ENCODE measurements at regions of chr7 and their contacts with region 1.

Region 1: DNA sequence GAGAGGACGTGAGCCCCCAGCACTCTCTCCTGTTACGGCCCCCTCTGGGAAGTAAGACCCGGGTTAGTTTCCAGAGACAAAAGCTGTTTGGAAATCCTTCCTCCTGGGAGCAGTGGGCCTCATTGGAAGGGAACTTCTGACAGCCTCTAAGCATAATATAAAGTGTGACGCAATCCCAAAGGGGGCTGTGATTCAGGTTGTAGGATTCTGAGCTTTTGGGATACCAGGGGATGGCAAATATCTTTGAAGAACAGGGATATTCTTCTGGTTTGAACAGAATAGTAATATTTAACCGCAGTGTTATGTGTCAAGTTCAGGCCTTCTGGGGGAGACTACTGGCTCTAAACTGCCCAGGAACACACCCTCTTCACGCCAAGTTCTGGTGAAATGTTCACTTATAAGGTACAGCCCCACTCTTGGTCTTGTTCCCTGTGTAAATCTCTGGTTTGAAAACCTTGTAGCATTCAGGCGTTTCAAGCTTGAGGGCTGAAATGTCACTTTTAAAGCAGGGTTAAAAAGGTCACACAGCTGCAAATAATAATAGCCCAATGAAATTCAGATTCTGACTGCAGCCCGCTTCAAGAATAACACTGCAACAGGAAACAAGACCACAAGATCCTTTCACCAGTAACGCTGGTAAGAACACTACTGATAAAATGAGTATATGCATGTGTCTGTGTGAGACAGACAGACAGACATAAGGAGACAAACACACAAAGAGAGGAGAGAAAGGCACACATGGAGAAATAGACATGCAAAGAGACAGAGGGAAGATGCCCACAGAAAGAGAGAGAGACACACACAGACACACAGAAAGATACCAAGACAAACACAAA is 69.0 kb downstream of the CREB5 start:
- DNase-seq: peak; percentile 85
- ATAC-seq: peak; percentile 63
- H3K4me3 ChIP-seq: no peak overlapping the region
- H3K27ac ChIP-seq: peak overlapping the region; percentile 72
- H3K4me1 ChIP-seq: peaks cover 41% of the 10 kb centered on the region
- H3K27me3 ChIP-seq: no peaks in the 10 kb centered on the region
- CTCF ChIP-seq: no peak
- EP300 ChIP-seq: peak; percentile 88 to 94
- POLR2A ChIP-seq: no peak
- RAD21 ChIP-seq: peak; percentile 26

Region 2: DNA sequence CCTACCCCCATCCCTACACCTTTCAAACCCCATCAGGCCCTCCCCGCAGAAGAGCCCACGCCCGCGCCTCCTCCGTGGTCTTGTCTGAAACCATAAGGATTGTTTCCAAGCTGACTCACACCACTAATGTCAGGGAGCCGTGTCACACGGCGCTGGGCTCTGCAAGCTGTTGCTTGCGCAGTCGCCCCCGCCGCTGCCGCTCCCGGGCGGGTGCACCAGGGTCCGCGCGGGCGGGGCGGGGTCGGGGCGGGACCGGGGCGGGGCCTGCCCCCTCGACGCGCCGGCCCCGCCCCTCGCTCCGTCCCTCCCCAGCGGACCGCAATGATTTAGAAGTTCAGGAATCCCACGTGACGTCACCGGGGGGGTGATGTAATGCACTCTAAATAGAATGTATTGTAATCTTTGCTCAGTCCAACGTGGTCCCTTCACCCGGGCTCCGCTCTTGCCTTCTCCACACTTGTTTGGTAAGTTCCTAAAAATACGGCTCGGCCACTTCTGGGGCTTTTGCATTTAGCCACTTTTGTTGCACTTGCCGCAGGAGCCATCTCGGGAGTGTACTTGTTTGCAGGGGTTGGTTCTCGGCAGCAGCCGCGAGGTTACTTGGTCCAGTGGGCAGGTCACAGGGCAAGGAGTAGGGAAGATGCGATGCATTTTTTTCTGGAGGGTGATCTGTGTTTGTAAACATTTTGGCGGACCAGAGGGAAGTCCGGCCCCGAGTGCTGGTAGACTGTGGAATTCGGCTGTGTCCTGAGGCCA is 72.2 kb before region 1 on chr7:
- CTCF ChIA-PET with region 1: interaction called, 48 read pairs
- POLR2A ChIA-PET with region 1: interaction called, 74 read pairs
- RAD21 ChIA-PET with region 1: interaction called, 130 read pairs
- SMC1A ChIA-PET with region 1: interaction called, 120 read pairs
- in situ Hi-C with region 1: no loop called
- intact Hi-C with region 1: loop called (anchors 1 kb)
- DNase-seq: no peak
- ATAC-seq: peak; percentile 60
- H3K4me3 ChIP-seq: peak overlapping the region; percentile 53
- H3K27ac ChIP-seq: no peak overlapping the region
- H3K4me1 ChIP-seq: 0 out of 2 replicates have a peak, but pooled peaks cover 2% of the 10 kb centered on the region
- H3K27me3 ChIP-seq: peaks cover 0 to 14% of the 10 kb centered on the region in 2 experiments; a peak in 2 of 4 replicates
- CTCF ChIP-seq: no peak
- EP300 ChIP-seq: 0 out of 4 replicates have a peak, but pooled peaks of 1 of the 2 experiments have one; percentile 33
- POLR2A ChIP-seq: no peak
- RAD21 ChIP-seq: no peak

Region 3: DNA sequence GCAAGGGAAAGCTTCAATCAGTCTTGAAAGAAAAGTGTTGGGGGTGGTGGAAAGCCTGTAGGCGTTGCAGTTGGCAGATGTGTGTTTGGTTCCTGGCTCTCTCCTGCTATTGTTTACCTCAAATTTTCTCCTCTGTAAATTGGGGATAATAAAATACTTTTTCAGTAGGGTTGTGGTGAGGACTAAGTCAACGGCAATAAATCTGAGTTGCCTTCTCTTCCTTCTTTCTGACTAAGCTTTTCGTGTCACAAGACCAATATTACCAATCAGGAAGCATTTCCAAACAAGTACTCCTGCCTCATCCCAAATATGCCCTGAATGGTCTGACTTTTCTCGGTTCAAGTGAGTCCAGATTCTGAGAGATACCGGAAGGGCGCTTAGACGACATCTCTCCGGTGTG is 15.0 kb before region 1 on chr7:
- CTCF ChIA-PET with region 1: interaction called, 18 read pairs
- POLR2A ChIA-PET with region 1: interaction called, 19 read pairs
- RAD21 ChIA-PET with region 1: interaction called, 38 read pairs
- SMC1A ChIA-PET with region 1: interaction called, 45 read pairs
- in situ Hi-C with region 1: no loop called
- intact Hi-C with region 1: no loop called
- DNase-seq: no peak
- ATAC-seq: no peak
- H3K4me3 ChIP-seq: no peak overlapping the region
- H3K27ac ChIP-seq: no peak overlapping the region
- H3K4me1 ChIP-seq: no peaks in the 10 kb centered on the region
- H3K27me3 ChIP-seq: no peaks in the 10 kb centered on the region
- CTCF ChIP-seq: no peak
- EP300 ChIP-seq: no peak
- POLR2A ChIP-seq: no peak
- RAD21 ChIP-seq: no peak

Region 4: DNA sequence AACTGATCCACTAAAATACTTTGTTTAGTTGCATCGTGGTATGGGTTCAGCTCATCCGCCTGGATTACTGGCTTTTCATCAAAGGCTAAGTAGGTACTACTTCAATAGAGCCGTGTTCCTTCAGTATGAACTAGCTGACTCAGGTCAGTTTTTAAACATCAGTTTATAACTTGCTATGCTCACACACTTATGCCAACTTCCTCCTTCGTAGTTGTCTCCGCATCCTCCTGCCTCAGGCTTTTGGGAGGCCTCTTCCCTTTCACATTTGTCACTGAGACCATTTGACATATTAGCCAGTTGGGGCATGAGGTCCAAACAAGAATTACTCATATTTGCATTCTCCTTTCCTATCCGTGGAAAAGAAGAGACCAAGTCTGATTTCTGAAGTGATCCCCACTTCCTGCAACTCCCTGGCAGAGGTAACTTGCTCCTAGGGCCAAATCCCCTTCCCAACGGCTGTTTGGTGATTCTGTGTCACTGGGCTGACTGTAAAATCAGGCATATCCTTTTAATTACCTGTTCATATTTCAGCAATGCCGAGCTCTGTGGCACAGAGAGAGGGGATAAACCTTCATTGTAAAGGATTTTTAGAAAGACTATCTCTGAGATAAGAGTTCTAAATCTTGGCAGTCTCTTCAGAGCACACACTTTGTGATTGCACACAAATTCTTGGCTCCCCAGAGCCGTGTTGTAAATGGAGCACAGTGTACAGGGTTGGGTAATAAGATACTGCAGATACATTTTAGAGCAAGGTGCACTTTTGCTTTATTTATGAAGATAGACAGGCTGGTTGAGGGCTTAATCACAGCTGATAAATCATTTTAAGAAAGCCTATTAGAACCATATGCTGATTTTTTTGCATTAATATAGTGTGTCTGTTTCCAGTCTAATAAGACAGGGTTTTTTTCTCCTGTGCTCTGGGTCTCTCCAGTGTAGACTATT is 39.0 kb after region 1 on chr7:
- CTCF ChIA-PET with region 1: interaction called, 3 read pairs
- POLR2A ChIA-PET with region 1: interaction called, 3 read pairs
- RAD21 ChIA-PET with region 1: interaction called, 15 read pairs
- SMC1A ChIA-PET with region 1: interaction called, 153 read pairs
- in situ Hi-C with region 1: no loop called
- intact Hi-C with region 1: loop called (anchors 5 kb)
- DNase-seq: no peak
- ATAC-seq: no peak
- H3K4me3 ChIP-seq: no peak overlapping the region
- H3K27ac ChIP-seq: no peak overlapping the region
- H3K4me1 ChIP-seq: peaks cover 14% of the 10 kb centered on the region
- H3K27me3 ChIP-seq: no peaks in the 10 kb centered on the region
- CTCF ChIP-seq: no peak
- EP300 ChIP-seq: no peak
- POLR2A ChIP-seq: no peak
- RAD21 ChIP-seq: no peak

Region 5: GRCh38 chr7:28551331-28551730 is 70.0 kb after region 1 on chr7:
- CTCF ChIA-PET with region 1: no interaction called
- POLR2A ChIA-PET with region 1: no interaction called
- RAD21 ChIA-PET with region 1: no interaction called
- SMC1A ChIA-PET with region 1: no interaction called
- in situ Hi-C with region 1: no loop called
- intact Hi-C with region 1: no loop called
- DNase-seq: no peak
- ATAC-seq: no peak
- H3K4me3 ChIP-seq: no peak overlapping the region
- H3K27ac ChIP-seq: no peak overlapping the region
- H3K4me1 ChIP-seq: no peaks in the 10 kb centered on the region
- H3K27me3 ChIP-seq: no peaks in the 10 kb centered on the region
- CTCF ChIP-seq: no peak
- EP300 ChIP-seq: no peak
- POLR2A ChIP-seq: no peak
- RAD21 ChIP-seq: no peak

Region 6: GRCh38 chr7:28581351-28581750 is 100.0 kb after region 1 on chr7:
- CTCF ChIA-PET with region 1: interaction called, 17 read pairs
- POLR2A ChIA-PET with region 1: interaction called, 81 read pairs
- RAD21 ChIA-PET with region 1: interaction called, 192 read pairs
- SMC1A ChIA-PET with region 1: interaction called, 177 read pairs
- in situ Hi-C with region 1: no loop called
- intact Hi-C with region 1: no loop called
- DNase-seq: no peak
- ATAC-seq: peak; percentile 25; the same call in 2 of the 3 replicates
- H3K4me3 ChIP-seq: no peak overlapping the region
- H3K27ac ChIP-seq: no peak overlapping the region
- H3K4me1 ChIP-seq: no peaks in the 10 kb centered on the region
- H3K27me3 ChIP-seq: no peaks in the 10 kb centered on the region
- CTCF ChIP-seq: no peak
- EP300 ChIP-seq: no peak
- POLR2A ChIP-seq: no peak
- RAD21 ChIP-seq: no peak

Region 7: GRCh38 chr7:28626624-28627262 is 145.4 kb after region 1 on chr7:
- CTCF ChIA-PET with region 1: interaction called, 11 read pairs
- POLR2A ChIA-PET with region 1: interaction called, 5 read pairs
- RAD21 ChIA-PET with region 1: interaction called, 40 read pairs
- SMC1A ChIA-PET with region 1: interaction called, 39 read pairs
- in situ Hi-C with region 1: loop called (anchors 5 kb)
- intact Hi-C with region 1: loop called (anchors 1 kb)
- DNase-seq: no peak
- ATAC-seq: peak; percentile 57
- H3K4me3 ChIP-seq: no peak overlapping the region
- H3K27ac ChIP-seq: no peak overlapping the region
- H3K4me1 ChIP-seq: peaks cover 3% of the 10 kb centered on the region; the same call in 1 of the 2 replicates
- H3K27me3 ChIP-seq: no peaks in the 10 kb centered on the region
- CTCF ChIP-seq: peak; percentile 50 to 70 (median 67)
- EP300 ChIP-seq: no peak
- POLR2A ChIP-seq: no peak
- RAD21 ChIP-seq: peak; percentile 74

Region 8: DNA sequence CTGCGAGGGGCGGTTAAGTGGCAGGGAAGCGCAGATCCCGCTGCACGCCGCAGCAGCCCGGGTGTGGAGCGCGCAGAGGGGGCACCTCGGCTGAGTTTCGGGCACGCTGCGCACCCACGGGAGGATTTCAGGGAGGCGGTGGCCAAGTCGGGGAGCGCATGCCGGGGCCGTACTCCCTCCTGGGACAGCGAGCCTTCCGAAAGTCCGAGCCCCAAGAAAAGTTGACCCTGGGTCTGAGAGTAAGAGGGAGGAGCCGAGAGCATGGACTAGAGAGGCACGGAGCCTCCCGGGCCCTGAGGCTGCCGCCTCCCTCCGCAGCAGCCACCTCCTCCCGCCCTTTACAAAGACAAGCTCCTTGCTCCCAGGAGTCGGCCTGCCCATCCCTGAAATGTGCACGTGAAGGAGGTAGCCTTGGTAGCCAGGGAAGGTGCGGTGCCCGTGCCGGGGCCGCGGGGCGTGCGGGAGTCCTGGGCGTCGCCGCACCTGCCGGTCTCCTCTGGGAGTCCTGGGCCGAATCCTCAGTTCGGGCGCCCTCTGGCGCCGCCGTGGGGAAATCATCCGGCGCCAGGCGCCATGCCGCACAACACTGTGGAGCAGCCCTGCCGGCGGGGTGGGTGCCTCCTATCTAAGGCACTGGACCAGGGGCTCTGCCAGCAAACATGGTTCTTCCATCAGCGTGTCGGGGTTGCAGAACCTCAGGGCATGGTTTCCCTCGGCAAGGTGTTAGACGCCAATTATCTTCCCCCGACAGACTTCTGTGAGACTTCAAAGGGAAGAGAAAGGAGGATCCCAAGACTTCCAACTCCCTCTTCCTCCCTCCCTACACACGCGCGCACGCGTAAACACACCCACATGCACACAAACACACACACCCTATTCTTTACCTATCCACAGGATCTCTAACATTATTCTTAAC is 372.8 kb after region 1 on chr7:
- CTCF ChIA-PET with region 1: no interaction called
- POLR2A ChIA-PET with region 1: no interaction called
- RAD21 ChIA-PET with region 1: interaction called, 4 read pairs
- SMC1A ChIA-PET with region 1: no interaction called
- in situ Hi-C with region 1: no loop called
- intact Hi-C with region 1: loop called (anchors 5 kb)
- DNase-seq: peak; percentile 26
- ATAC-seq: peak; percentile 100
- H3K4me3 ChIP-seq: peak overlapping the region; percentile 74
- H3K27ac ChIP-seq: no peak overlapping the region
- H3K4me1 ChIP-seq: 0 out of 2 replicates have a peak, but pooled peaks cover 3% of the 10 kb centered on the region
- H3K27me3 ChIP-seq: peaks cover 1 to 10% of the 10 kb centered on the region in 2 experiments; a peak in 3 of 4 replicates
- CTCF ChIP-seq: peak; percentile 85 to 95 (median 93); a peak in 5 of 6 replicates
- EP300 ChIP-seq: no peak
- POLR2A ChIP-seq: no peak
- RAD21 ChIP-seq: peak; percentile 90